Gastrocnemius medialis (tissue), 4 donors: ENCODE measurements at regions of chr1 and their contacts with region 1.

Region 1: DNA sequence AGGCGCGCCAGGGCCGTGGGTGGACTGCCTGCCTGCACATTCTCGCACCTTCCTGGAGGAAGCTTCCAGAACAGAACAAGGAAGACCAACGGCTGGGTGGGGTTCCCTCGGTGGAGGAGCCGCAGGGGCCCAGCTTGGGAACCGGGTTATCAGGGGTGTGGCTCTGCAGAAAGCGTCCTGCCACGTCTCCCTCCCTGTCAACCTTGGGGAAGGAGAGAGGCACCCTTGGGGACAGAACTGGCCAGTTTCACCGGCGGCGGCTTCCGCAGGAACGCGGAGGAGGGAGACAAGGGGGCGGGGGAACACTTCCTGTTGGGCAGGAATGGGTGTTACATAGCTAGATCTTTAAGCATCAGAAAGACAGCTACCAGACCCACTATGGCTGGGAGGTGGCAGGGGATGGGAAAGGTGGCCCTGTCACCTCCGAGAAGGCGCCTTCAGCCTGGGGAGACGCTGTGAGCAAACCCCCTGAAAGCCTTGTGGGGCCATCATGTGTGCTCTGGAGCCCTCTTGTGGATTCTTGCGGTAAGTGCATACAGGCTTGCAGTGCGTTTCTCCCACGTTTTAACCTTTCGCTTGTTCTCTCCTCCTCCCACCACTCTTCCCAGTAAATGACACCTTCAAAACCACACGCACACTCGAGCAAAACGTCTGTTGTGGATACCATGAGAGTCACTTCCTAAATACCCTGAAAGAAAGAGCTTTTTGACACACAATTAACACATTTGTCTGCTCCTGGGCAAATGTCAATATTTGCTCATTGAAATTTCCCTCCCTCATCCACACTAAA is 3.8 kb upstream of the PLEKHA6 start:
- DNase-seq: peak; percentile 32 to 48
- ATAC-seq: peak; percentile 74 to 85
- H3K4me3 ChIP-seq: peak overlapping the region; percentile 40 to 51 (median 45)
- H3K27ac ChIP-seq: peak overlapping the region; percentile 0 to 49 (median 28)
- H3K4me1 ChIP-seq: peaks cover 9% of the 10 kb centered on the region in 2 donors
- H3K27me3 ChIP-seq: peaks cover 0 to 5% (median 0%) of the 10 kb centered on the region in 3 donors
- CTCF ChIP-seq: peak; percentile 93 to 96 (median 95)
- POLR2A ChIP-seq: no peak

Region 2: GRCh38 chr1:203861379-203862184 is 501.9 kb before region 1 on chr1 and contains the start of gene SNRPE:
- in situ Hi-C with region 1: loop called in 1 of 4 experiments (anchors 25 kb)
- intact Hi-C with region 1: loop called (anchors 10 kb)
- DNase-seq: peak; percentile 95
- ATAC-seq: peak; percentile 96 to 99
- H3K4me3 ChIP-seq: peak within 1 kb of the TSS; percentile 86 to 96 (median 89)
- H3K27ac ChIP-seq: peak within 1 kb of the TSS; percentile 78 to 85 (median 82)
- H3K4me1 ChIP-seq: peaks cover 12 to 14% of the 10 kb centered on the region in 2 donors
- H3K27me3 ChIP-seq: no peaks in the 10 kb centered on the region
- CTCF ChIP-seq: peak; percentile 86 to 98 (median 95)
- POLR2A ChIP-seq: peak; percentile 41 to 74
- total RNA-seq, gene SNRPE: 23.7 to 39.1 (median 30.5) TPM

Region 3: DNA sequence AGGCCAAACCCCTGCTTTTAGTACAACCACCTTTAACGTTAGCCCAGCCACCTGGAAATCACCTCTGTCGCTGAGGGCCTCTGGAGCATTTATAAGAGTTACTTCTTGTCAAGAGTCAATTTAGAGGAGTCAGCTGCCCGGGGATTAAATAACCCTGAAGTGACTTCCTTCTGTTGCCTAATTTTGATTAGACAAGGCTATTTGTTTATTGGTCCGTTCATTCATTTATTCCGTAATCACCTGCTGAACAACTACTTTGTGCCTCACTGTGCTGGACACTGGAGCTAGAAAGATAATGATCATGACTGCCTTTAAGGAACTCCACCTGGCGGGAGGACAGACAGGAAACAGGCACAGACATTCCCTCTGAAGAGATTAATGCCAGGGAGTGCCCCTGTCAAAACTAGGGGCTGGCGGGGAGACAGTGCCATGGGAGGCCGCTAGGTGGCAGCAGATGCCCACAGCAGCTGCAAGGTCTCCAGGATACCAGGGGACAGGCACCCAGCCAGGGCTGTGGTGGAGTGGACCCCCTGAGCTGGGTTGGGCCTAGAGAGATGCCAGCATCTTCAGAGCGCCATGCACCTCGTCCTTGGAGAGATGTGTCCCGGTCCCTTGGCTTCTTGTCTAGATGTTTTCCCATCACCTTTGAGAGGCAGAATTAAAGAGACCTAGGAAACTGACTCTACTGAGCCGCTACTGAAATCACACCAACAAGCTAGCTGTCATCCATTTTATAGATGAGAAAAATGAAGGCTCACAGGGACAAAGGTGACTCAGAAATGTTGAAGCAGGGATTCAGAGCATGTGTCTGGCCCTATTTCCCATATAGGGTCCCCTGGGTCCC is 201.1 kb before region 1 on chr1:
- in situ Hi-C with region 1: loop called in 3 of 4 experiments (anchors 5 to 10 kb)
- intact Hi-C with region 1: loop called (anchors 1 kb)
- DNase-seq: peak; percentile 30 to 64
- ATAC-seq: peak; percentile 76 to 81
- H3K4me3 ChIP-seq: no peak overlapping the region
- H3K27ac ChIP-seq: no peak overlapping the region
- H3K4me1 ChIP-seq: peaks cover 0 to 3% of the 10 kb centered on the region in 2 donors
- H3K27me3 ChIP-seq: peaks cover 0 to 3% (median 0%) of the 10 kb centered on the region in 3 donors
- CTCF ChIP-seq: peak; percentile 95 to 100 (median 98)
- POLR2A ChIP-seq: no peak

Region 4: GRCh38 chr1:204213668-204214662 is 149.6 kb before region 1 on chr1 and contains the start of gene GOLT1A:
- in situ Hi-C with region 1: loop called in 3 of 4 experiments (anchors 5 to 25 kb)
- intact Hi-C with region 1: loop called (anchors 1 kb)
- DNase-seq: peak; percentile 28 to 34
- ATAC-seq: peak; percentile 56 to 62
- H3K4me3 ChIP-seq: peak within 1 kb of the TSS in 3 of 4 donors; percentile 15 to 47 (median 40)
- H3K27ac ChIP-seq: no peak within 1 kb of the TSS
- H3K4me1 ChIP-seq: peaks cover 0 to 6% of the 10 kb centered on the region in 2 donors
- H3K27me3 ChIP-seq: peaks cover 5 to 13% (median 8%) of the 10 kb centered on the region in 3 donors
- CTCF ChIP-seq: peak; percentile 14 to 59 (median 53)
- POLR2A ChIP-seq: no peak
- total RNA-seq, gene GOLT1A: 1.1 to 1.3 TPM in 2 of 4 donors, not detected in the others

Region 5: DNA sequence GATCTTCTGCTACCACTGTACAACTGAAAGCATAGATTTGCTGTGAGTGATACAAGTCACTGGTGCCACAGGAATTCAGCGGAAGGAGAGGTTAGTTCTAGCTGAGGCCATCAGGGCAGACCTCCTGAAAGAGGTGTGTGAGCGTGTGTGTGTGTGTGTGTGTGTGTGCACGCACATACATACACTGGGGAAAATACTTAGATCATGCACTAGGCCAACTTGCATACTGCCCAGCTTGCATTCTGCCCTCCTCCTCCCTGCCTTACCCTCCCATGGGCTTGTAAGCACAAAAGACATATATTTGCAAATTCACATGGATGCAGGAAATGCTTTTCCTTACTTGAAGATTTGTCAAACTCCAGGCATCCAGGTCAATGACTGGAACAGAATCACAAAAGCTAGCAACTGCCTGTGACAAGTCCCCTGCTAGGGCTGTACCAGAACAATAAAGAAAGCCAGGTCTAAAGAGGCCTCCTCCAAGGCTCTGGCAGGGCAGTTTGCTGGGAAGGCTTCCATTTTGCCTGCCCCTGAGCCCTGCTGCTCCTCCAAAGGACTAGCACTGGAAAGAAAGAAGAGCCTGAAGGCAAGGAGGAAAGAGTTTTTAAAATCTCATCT is 27.0 kb before region 1 on chr1:
- in situ Hi-C with region 1: no loop called
- intact Hi-C with region 1: loop called (anchors 1 kb)
- DNase-seq: no peak
- ATAC-seq: no peak
- H3K4me3 ChIP-seq: no peak overlapping the region
- H3K27ac ChIP-seq: no peak overlapping the region
- H3K4me1 ChIP-seq: peaks cover 0 to 4% of the 10 kb centered on the region in 2 donors
- H3K27me3 ChIP-seq: no peaks in the 10 kb centered on the region
- CTCF ChIP-seq: no peak
- POLR2A ChIP-seq: no peak